ENCODE measurements at regions of chr16 and their contacts with region 1.

Region 1: GRCh38 chr16:1610276-1611017 is 1.4 kb downstream of the IFT140 start:
- DNase-seq: peak; percentile 91 to 95
- ATAC-seq: peak; percentile 69 to 85 (median 74)
- H3K4me3 ChIP-seq: peak overlapping the region; percentile 94
- H3K27ac ChIP-seq: peak overlapping the region; percentile 90
- H3K4me1 ChIP-seq: peaks cover 37% of the 10 kb centered on the region
- H3K27me3 ChIP-seq: no peaks in the 10 kb centered on the region
- CTCF ChIP-seq: no peak

Region 2: DNA sequence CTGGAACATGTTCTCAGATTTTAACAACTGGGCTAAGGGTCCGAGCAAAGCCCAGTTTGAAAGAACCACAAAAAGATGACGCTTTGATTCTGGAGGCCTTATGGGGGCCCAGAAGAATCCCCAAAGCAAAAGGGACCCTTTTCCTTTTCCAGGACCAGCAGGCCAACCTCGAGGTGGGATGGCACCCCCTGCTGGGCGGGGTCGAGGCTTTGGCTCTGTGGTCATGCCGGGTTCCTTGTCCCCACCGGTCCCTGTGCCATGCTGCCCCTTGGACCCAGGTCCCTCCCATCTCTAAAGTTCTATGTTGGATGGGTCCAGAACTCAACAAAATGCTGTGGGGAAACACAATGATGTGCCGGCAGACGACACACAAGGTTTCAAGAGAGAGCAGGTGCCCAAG is 46.1 kb before region 1 on chr16:
- intact Hi-C with region 1: loop called in 1 of 2 experiments (anchors 5 kb)
- DNase-seq: no peak
- ATAC-seq: peak in 2 of 4 donors; percentile 54 to 67
- H3K4me3 ChIP-seq: no peak overlapping the region
- H3K27ac ChIP-seq: no peak overlapping the region
- H3K4me1 ChIP-seq: no peaks in the 10 kb centered on the region
- H3K27me3 ChIP-seq: no peaks in the 10 kb centered on the region
- CTCF ChIP-seq: peak; percentile 42

Region 3: DNA sequence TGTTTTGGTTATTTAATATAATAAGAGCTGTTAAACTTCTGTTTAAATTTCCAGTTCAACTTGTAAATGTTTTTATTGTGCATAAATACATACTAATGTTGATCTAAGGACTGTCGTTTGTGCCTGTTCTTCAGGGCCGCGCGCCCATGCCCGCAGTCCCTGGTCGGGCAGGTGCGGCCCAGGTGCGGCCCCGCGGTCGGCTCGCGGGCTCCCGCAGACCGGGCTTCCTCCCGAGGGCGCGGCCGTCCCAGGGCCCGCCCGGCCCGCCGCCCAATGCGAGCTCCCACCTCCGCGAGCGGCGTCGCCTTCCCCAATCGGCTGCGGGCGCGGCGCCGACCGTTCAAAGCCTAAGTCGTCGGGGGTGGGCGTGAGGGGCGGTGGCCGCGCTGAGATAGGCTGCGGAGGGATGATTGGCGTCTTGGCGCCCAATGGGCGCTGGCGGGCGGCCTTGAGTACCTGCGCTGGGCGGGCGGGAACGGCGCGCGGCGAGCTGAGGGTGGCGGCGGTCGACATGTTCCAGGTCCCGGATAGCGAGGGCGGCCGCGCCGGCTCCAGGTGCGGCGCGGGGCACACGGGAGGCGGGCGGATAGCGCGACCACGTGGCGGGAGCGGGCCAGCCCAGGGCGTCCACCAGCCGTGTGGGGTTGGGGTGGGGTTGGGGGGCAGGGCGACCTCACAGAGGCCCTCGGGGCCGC is 67.5 kb after region 1 on chr16 and contains the start of gene JPT2:
- intact Hi-C with region 1: loop called in 1 of 2 experiments (anchors 5 kb)
- DNase-seq: peak; percentile 97 to 98
- ATAC-seq: peak; percentile 97 to 99 (median 98)
- H3K4me3 ChIP-seq: peak within 1 kb of the TSS; percentile 81
- H3K27ac ChIP-seq: peak within 1 kb of the TSS; percentile 71
- H3K4me1 ChIP-seq: peaks cover 6% of the 10 kb centered on the region
- H3K27me3 ChIP-seq: no peaks in the 10 kb centered on the region
- CTCF ChIP-seq: no peak
- total RNA-seq, gene JPT2: 21.4 to 30.6 (median 25.1) TPM

Region 4: GRCh38 chr16:1691956-1692355 is 81.5 kb after region 1 on chr16:
- intact Hi-C with region 1: no loop called
- DNase-seq: no peak
- ATAC-seq: peak in 1 of 4 donors; percentile 34
- H3K4me3 ChIP-seq: no peak overlapping the region
- H3K27ac ChIP-seq: no peak overlapping the region
- H3K4me1 ChIP-seq: no peaks in the 10 kb centered on the region
- H3K27me3 ChIP-seq: no peaks in the 10 kb centered on the region
- CTCF ChIP-seq: no peak

Region 5: GRCh38 chr16:1705688-1706385 is 95.4 kb after region 1 on chr16 and contains the start of gene MAPK8IP3:
- intact Hi-C with region 1: loop called (anchors 10 kb)
- DNase-seq: peak; percentile 91 to 96
- ATAC-seq: peak; percentile 91 to 93 (median 92)
- H3K4me3 ChIP-seq: peak within 1 kb of the TSS; percentile 96
- H3K27ac ChIP-seq: peak within 1 kb of the TSS; percentile 99
- H3K4me1 ChIP-seq: peaks cover 29% of the 10 kb centered on the region
- H3K27me3 ChIP-seq: no peaks in the 10 kb centered on the region
- CTCF ChIP-seq: peak; percentile 98
- total RNA-seq, gene MAPK8IP3: 22.6 to 31.6 (median 24.9) TPM

Region 6: GRCh38 chr16:1929578-1930337 is 319.3 kb after region 1 on chr16:
- intact Hi-C with region 1: loop called in 1 of 2 experiments (anchors 10 kb)
- DNase-seq: peak; percentile 92 to 95
- ATAC-seq: peak; percentile 94 to 98 (median 96)
- H3K4me3 ChIP-seq: peak overlapping the region; percentile 71
- H3K27ac ChIP-seq: peak overlapping the region; percentile 67
- H3K4me1 ChIP-seq: peaks cover 3% of the 10 kb centered on the region
- H3K27me3 ChIP-seq: peaks cover 0 to 4% (median 0%) of the 10 kb centered on the region in 3 donors
- CTCF ChIP-seq: peak; percentile 99